Breast epithelium (tissue), 4 donors: ENCODE measurements at regions of chr12 and their contacts with region 1.

Region 1: DNA sequence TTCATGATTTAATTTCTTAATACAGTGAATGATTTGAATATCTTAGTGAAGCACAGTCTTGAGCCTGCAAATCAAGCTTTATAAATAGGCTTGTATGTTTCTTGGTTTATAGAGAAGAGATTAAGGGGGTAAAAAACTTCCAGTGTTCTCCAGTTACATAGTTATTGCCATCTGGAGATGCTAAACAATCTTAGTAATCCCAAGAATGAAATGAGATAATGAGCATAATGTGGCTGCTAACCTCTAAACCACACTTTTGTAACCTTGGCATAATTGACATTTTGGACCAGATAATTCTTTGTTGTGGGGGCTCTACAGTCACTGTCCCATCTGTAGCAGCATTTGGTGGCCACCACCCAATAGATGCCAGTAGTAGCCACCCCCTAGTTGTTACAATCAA is 316.8 kb downstream of the CCDC91 start:
- DNase-seq: no peak
- H3K4me3 ChIP-seq: no peak overlapping the region
- H3K27ac ChIP-seq: no peak overlapping the region
- H3K4me1 ChIP-seq: no peaks in the 10 kb centered on the region
- H3K27me3 ChIP-seq: no peaks in the 10 kb centered on the region
- CTCF ChIP-seq: no peak
- POLR2A ChIP-seq: no peak

Region 2: GRCh38 chr12:26704684-26705460 is 1802.2 kb before region 1 on chr12:
- intact Hi-C with region 1: no loop called
- DNase-seq: no peak
- H3K4me3 ChIP-seq: no peak overlapping the region
- H3K27ac ChIP-seq: no peak overlapping the region
- H3K4me1 ChIP-seq: peaks cover 0 to 8% of the 10 kb centered on the region in 2 donors
- H3K27me3 ChIP-seq: no peaks in the 10 kb centered on the region
- CTCF ChIP-seq: no peak
- POLR2A ChIP-seq: no peak

Region 3: GRCh38 chr12:27922501-27923139 is 584.4 kb before region 1 on chr12:
- intact Hi-C with region 1: loop called (anchors 5 kb)
- DNase-seq: peak in 1 of 2 donors; percentile 48
- H3K4me3 ChIP-seq: no peak overlapping the region
- H3K27ac ChIP-seq: peak overlapping the region; percentile 9 to 16
- H3K4me1 ChIP-seq: no peaks in the 10 kb centered on the region
- H3K27me3 ChIP-seq: no peaks in the 10 kb centered on the region
- CTCF ChIP-seq: no peak
- POLR2A ChIP-seq: no peak

Region 4: GRCh38 chr12:28443337-28443736 is 63.7 kb before region 1 on chr12:
- intact Hi-C with region 1: no loop called
- DNase-seq: no peak
- H3K4me3 ChIP-seq: no peak overlapping the region
- H3K27ac ChIP-seq: no peak overlapping the region
- H3K4me1 ChIP-seq: no peaks in the 10 kb centered on the region
- H3K27me3 ChIP-seq: no peaks in the 10 kb centered on the region
- CTCF ChIP-seq: no peak
- POLR2A ChIP-seq: no peak